ENCODE measurements at regions of chr5 and their contacts with region 1.

Region 1: GRCh38 chr5:171595801-171596231 is 176.4 kb downstream of the FGF18 start:
- DNase-seq: peak; percentile 22 to 75
- H3K4me3 ChIP-seq: peak overlapping the region in 1 of 2 donors; percentile 7
- H3K27ac ChIP-seq: peak overlapping the region; percentile 65 to 68
- H3K4me1 ChIP-seq: peaks cover 5 to 12% of the 10 kb centered on the region in 2 donors
- H3K27me3 ChIP-seq: no peaks in the 10 kb centered on the region
- CTCF ChIP-seq: no peak

Region 2: DNA sequence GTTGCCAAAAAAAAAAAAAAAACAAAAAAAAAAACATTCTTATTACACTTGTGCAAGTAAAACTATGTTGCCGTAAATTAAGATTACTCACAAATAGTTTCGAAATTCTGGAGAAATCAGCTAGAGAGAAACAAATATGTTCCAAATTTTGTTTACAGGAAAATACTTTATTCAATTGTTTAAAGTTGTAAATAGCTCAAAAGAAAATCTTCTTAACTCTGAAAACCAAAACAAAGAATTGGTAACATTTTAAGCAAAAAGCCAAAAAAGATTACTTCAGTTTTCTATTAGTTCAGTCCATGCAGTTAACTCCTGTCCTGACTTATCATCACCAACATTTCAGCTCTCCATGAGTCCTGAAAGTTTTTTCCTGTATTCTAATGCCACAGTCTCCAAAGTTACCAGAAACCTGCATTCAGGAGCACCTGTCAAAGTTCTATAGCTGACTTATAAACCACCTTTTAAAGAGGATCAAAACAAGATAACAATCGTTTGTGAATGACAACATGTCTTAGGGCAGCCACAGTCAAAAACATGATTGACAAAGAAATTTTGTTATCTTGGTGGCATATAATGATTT is 539.9 kb before region 1 on chr5:
- intact Hi-C with region 1: no loop called
- DNase-seq: no peak
- H3K4me3 ChIP-seq: no peak overlapping the region
- H3K27ac ChIP-seq: no peak overlapping the region
- H3K4me1 ChIP-seq: no peaks in the 10 kb centered on the region
- H3K27me3 ChIP-seq: no peaks in the 10 kb centered on the region
- CTCF ChIP-seq: no peak

Region 3: DNA sequence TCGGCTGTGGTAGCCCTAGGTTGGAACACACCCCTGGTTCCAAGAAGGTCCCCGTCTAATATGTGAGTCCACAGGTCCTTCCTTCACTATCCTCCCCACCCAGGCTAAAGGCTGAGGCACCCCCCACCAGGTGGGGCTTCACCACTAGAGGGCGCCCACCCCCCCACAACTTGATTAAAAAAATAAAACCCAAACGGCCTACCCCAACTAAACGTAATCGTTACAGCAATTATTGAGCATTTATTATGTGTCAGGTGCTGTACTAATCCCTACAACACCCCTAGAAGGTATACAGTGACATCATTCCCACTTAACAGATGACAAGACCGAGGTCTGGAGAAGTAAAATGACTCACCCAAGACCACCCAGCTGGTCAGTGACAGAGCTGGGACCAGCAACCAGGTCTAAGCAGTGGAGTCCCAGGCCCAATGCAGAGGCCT is 111.3 kb before region 1 on chr5:
- intact Hi-C with region 1: loop called (anchors 5 kb)
- DNase-seq: no peak
- H3K4me3 ChIP-seq: no peak overlapping the region
- H3K27ac ChIP-seq: peak overlapping the region in 1 of 2 donors; percentile 72
- H3K4me1 ChIP-seq: peaks cover 0 to 5% of the 10 kb centered on the region in 2 donors
- H3K27me3 ChIP-seq: no peaks in the 10 kb centered on the region
- CTCF ChIP-seq: peak; percentile 56 to 73 (median 64)

Measured in ascending aorta (tissue), 2 donors.